Naive thymus-derived CD4-positive, alpha-beta T cell (primary cell): ENCODE measurements at regions of chr3 and their contacts with region 1.

Region 1: DNA sequence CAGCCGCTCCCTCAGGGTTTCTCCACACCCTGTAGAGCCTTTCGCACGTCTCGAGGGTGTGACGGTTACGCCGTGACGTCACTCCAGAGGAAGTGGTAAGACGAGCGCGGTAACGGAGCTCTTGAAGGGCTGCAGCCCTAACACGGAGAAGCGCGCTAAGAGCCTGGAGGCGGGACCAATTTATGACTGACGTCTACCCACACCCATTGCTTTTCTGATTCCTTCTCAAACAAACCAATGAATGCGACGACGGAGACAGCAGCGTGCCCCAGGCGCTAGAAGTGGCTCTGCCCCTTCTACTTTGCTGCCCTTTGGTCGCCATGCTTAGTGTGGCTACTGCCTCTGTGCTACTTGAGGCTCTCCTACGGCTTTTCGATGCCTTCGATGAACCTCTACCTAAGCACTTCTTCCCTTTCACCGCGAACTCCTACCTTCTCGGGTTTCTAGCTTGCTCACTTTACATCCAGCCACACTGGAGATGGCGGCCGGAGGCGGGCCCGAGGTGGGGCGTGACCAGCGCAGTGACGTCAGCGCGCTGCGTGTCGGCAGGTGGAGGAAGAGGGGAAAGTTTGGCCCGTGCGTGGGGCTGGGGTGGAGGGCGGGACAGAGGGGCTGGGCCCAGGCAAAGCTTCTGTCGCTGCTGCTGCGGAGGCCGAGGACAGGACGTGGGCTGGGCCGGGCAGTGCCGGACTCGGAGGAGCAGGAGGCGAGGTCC is at the start of gene OXSR1:
- DNase-seq: peak; percentile 94 to 99 (median 98)
- ATAC-seq: peak; percentile 93
- H3K4me3 ChIP-seq: peak within 1 kb of the TSS; percentile 84
- H3K4me3 Mint-ChIP-seq: peak within 1 kb of the TSS; percentile 90 to 98 (median 96)
- H3K27ac ChIP-seq: peak within 1 kb of the TSS; percentile 98
- H3K27ac Mint-ChIP-seq: peak within 1 kb of the TSS; percentile 99 to 100 (median 100)
- H3K4me1 ChIP-seq: peaks cover 18 to 22% of the 10 kb centered on the region in 2 donors
- H3K4me1 Mint-ChIP-seq: peaks cover 25 to 49% (median 44%) of the 10 kb centered on the region in 7 donors
- H3K27me3 ChIP-seq: no peaks in the 10 kb centered on the region
- H3K27me3 Mint-ChIP-seq: peaks cover 0 to 6% (median 0%) of the 10 kb centered on the region in 5 donors
- total RNA-seq, gene OXSR1: 35.0 to 59.7 (median 38.8) TPM

Region 2: GRCh38 chr3:37996785-37997301 is 168.3 kb before region 1 on chr3:
- CTCF ChIA-PET with region 1: no interaction called
- POLR2A ChIA-PET with region 1: interaction called, 4 read pairs
- intact Hi-C with region 1: loop called (anchors 1 kb)
- DNase-seq: peak; percentile 59 to 82 (median 76)
- ATAC-seq: peak; percentile 78
- H3K4me3 ChIP-seq: no peak overlapping the region
- H3K4me3 Mint-ChIP-seq: peak overlapping the region in 9 of 10 donors; percentile 47 to 83 (median 71)
- H3K27ac ChIP-seq: no peak overlapping the region
- H3K27ac Mint-ChIP-seq: peak overlapping the region; percentile 80 to 97 (median 96)
- H3K4me1 ChIP-seq: peaks cover 47 to 48% of the 10 kb centered on the region in 2 donors
- H3K4me1 Mint-ChIP-seq: peaks cover 39 to 69% (median 62%) of the 10 kb centered on the region in 7 donors
- H3K27me3 ChIP-seq: no peaks in the 10 kb centered on the region
- H3K27me3 Mint-ChIP-seq: no peaks in the 10 kb centered on the region

Region 3: DNA sequence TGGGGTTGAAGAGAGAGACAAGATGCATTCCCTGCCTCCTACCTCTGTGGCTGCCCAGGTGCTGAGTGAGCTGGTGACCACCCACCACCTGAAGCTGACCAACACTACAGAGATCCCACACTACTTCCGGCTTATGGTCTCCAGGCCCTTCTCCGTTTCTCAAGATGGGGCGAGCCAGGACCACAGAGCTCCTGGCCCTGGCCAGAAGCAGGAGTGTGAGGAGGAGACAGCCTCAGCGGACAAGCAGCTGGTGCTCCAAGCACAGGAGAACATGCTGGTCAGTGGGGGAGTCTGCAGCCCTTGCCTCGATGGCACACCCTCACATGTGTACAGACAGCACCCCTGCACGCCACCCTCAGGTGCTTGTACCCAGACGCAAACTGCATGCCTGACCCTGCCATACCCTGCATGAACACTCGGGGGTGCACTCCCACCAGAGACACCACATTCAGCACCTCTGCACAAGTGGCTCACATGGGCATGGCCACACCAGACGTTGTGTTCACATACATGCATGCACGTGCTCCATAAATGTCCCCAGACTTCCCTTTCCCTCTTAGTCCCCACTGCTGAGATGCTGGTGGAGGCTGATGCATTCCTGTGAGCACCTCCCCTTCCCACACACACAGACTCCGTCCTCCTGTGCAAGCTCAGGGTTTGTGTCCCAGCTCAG is 47.2 kb before region 1 on chr3:
- CTCF ChIA-PET with region 1: no interaction called
- POLR2A ChIA-PET with region 1: interaction called, 3 read pairs
- intact Hi-C with region 1: loop called in 1 of 2 experiments (anchors 1 kb)
- DNase-seq: peak; percentile 59 to 79 (median 73)
- ATAC-seq: peak; percentile 90
- H3K4me3 ChIP-seq: no peak overlapping the region
- H3K4me3 Mint-ChIP-seq: no peak overlapping the region
- H3K27ac ChIP-seq: no peak overlapping the region
- H3K27ac Mint-ChIP-seq: peak overlapping the region in 5 of 9 donors; percentile 22 to 84 (median 49)
- H3K4me1 ChIP-seq: no peaks in the 10 kb centered on the region
- H3K4me1 Mint-ChIP-seq: peaks cover 4 to 15% (median 7%) of the 10 kb centered on the region in 7 donors
- H3K27me3 ChIP-seq: no peaks in the 10 kb centered on the region
- H3K27me3 Mint-ChIP-seq: no peaks in the 10 kb centered on the region

Region 4: GRCh38 chr3:38210141-38210757 is 45.1 kb after region 1 on chr3:
- CTCF ChIA-PET with region 1: interaction called, 6 read pairs
- POLR2A ChIA-PET with region 1: no interaction called
- intact Hi-C with region 1: loop called in 1 of 2 experiments (anchors 5 kb)
- DNase-seq: no peak
- ATAC-seq: peak; percentile 48
- H3K4me3 ChIP-seq: no peak overlapping the region
- H3K4me3 Mint-ChIP-seq: peak overlapping the region in 2 of 10 donors; percentile 21 to 52
- H3K27ac ChIP-seq: no peak overlapping the region
- H3K27ac Mint-ChIP-seq: peak overlapping the region in 5 of 9 donors; percentile 5 to 74 (median 65)
- H3K4me1 ChIP-seq: no peaks in the 10 kb centered on the region
- H3K4me1 Mint-ChIP-seq: peaks cover 11 to 71% (median 68%) of the 10 kb centered on the region in 7 donors
- H3K27me3 ChIP-seq: no peaks in the 10 kb centered on the region
- H3K27me3 Mint-ChIP-seq: no peaks in the 10 kb centered on the region

Region 5: DNA sequence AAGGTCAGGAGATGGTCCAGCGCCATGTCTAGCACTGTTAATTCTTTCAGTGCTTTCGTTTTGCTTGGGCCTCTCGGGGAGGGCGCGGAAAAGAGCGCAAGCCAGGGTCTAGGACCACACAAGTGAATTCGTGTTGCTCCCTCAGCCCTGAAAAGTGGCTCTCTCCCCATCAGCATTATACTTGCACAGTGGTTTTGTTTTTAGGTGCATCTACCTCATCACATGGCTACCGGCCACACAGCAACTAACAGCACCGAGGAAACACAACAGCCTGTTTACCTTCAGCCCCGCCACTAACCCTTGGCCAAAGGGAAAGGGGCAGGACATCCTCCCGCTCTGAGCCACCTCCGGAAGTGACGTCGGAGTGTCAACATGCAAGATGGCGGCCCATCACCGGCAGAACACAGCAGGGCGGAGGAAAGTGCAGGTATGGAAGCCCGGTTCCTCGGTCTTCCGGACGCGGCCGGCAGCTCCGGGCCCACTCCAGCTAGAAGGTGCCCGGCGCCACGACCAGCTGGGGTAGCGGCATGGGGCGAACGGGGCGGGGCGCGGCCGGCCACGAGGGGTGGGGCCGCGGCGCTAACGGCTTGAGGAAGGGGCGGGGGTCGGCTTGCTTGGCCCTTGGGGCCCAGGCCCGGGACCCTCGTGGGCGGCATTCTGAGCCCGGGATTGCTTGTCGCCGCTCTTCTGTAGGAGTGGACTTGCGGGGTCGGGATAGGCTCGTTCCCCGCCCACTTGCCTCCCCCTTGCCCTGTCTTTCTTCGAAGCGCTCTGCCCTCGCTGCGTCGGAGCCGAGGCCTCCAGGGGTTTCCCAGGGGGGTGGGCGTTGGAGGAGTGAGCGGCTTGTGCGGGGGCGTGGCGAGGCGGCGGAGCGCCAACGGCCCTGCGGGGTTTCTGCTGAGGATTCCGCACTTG is 886.8 kb after region 1 on chr3 and contains the starts of genes SCN11A and WDR48:
- CTCF ChIA-PET with region 1: no interaction called
- POLR2A ChIA-PET with region 1: no interaction called
- intact Hi-C with region 1: loop called (anchors 2 kb)
- DNase-seq: peak; percentile 78 to 95 (median 90)
- ATAC-seq: peak; percentile 93
- H3K4me3 ChIP-seq: peak within 1 kb of the TSS; percentile 80
- H3K4me3 Mint-ChIP-seq: peak within 1 kb of the TSS; percentile 91 to 99 (median 99)
- H3K27ac ChIP-seq: peak within 1 kb of the TSS; percentile 98
- H3K27ac Mint-ChIP-seq: peak within 1 kb of the TSS; percentile 95 to 100 (median 99)
- H3K4me1 ChIP-seq: peaks cover 7 to 16% of the 10 kb centered on the region in 2 donors
- H3K4me1 Mint-ChIP-seq: peaks cover 32 to 81% (median 77%) of the 10 kb centered on the region in 7 donors
- H3K27me3 ChIP-seq: no peaks in the 10 kb centered on the region
- H3K27me3 Mint-ChIP-seq: no peaks in the 10 kb centered on the region
- total RNA-seq, gene SCN11A: 0.07 to 0.32 (median 0.19) TPM
- total RNA-seq, gene WDR48: 46.7 to 97.7 (median 68.0) TPM